ENCODE measurements at regions of chr9 and their contacts with region 1.

Region 1: GRCh38 chr9:7570107-7570720 is 229.4 kb downstream of the DMAC1 start:
- DNase-seq: peak; percentile 68
- H3K4me3 Mint-ChIP-seq: no peak overlapping the region
- H3K27ac Mint-ChIP-seq: no peak overlapping the region
- H3K4me1 Mint-ChIP-seq: no peaks in the 10 kb centered on the region
- H3K27me3 Mint-ChIP-seq: peaks cover 25% of the 10 kb centered on the region

Region 2: DNA sequence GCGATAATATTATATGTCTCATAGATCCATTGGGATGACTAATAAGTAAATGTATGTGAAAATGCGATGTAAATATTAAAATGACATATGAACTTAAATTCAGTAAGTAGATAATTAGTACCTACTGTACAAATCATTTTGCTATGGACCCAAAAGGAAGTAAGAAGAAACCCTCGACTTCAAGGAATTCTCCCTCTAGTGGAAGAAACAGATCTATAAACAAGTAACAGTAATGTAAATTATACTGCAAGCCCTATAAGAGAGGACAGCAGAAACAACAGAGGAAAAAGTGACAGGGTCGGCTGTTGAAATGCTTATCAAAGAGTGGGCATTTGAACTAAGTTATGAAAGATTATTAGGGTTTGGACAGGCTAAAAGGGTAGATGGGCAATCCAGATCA is 90.9 kb before region 1 on chr9:
- CTCF ChIA-PET with region 1: no interaction called
- POLR2A ChIA-PET with region 1: no interaction called
- DNase-seq: no peak
- H3K4me3 Mint-ChIP-seq: no peak overlapping the region
- H3K27ac Mint-ChIP-seq: no peak overlapping the region
- H3K4me1 Mint-ChIP-seq: no peaks in the 10 kb centered on the region
- H3K27me3 Mint-ChIP-seq: peaks cover 5% of the 10 kb centered on the region

Region 3: GRCh38 chr9:7510199-7510598 is 60.0 kb before region 1 on chr9:
- CTCF ChIA-PET with region 1: no interaction called
- POLR2A ChIA-PET with region 1: no interaction called
- DNase-seq: no peak
- H3K4me3 Mint-ChIP-seq: no peak overlapping the region
- H3K27ac Mint-ChIP-seq: no peak overlapping the region
- H3K4me1 Mint-ChIP-seq: no peaks in the 10 kb centered on the region
- H3K27me3 Mint-ChIP-seq: peaks cover 6% of the 10 kb centered on the region

Region 4: DNA sequence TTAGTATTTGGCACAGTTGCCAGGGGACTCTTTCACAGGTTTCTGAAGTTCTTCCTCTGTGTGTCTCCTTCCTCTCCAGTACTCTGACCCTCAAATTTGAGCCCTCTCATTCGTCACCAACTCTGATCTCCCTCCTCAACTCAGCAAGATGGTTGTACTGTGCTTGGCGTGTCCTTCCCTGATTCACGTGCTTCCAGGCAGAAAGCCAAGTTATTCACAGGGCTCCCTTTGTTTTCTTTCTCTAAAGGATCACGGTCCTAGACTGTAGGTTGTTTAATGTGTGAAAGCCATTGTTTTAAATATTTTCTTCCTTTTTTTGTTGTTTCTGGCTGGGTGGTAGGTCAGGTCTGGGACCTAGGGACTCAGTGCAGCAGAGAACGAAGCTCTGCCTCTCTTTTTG is 86.4 kb after region 1 on chr9:
- CTCF ChIA-PET with region 1: interaction called, 48 read pairs
- POLR2A ChIA-PET with region 1: no interaction called
- DNase-seq: no peak
- H3K4me3 Mint-ChIP-seq: no peak overlapping the region
- H3K27ac Mint-ChIP-seq: no peak overlapping the region
- H3K4me1 Mint-ChIP-seq: peaks cover 5% of the 10 kb centered on the region
- H3K27me3 Mint-ChIP-seq: no peaks in the 10 kb centered on the region

Region 5: GRCh38 chr9:8062459-8062858 is 492.2 kb after region 1 on chr9:
- CTCF ChIA-PET with region 1: no interaction called
- POLR2A ChIA-PET with region 1: no interaction called
- DNase-seq: no peak
- H3K4me3 Mint-ChIP-seq: no peak overlapping the region
- H3K27ac Mint-ChIP-seq: no peak overlapping the region
- H3K4me1 Mint-ChIP-seq: no peaks in the 10 kb centered on the region
- H3K27me3 Mint-ChIP-seq: no peaks in the 10 kb centered on the region